Left ventricle myocardium inferior (tissue), 1 donor: ENCODE measurements at regions of chr20 and their contacts with region 1.

Region 1: GRCh38 chr20:44310664-44311639 is at the start of gene FITM2:
- DNase-seq: peak; percentile 99
- H3K4me3 ChIP-seq: peak within 1 kb of the TSS; percentile 85
- H3K27ac ChIP-seq: peak within 1 kb of the TSS; percentile 91
- H3K4me1 ChIP-seq: peaks cover 56% of the 10 kb centered on the region
- H3K27me3 ChIP-seq: no peaks in the 10 kb centered on the region
- CTCF ChIP-seq: peak; percentile 95
- total RNA-seq, gene FITM2: 160 TPM

Region 2: DNA sequence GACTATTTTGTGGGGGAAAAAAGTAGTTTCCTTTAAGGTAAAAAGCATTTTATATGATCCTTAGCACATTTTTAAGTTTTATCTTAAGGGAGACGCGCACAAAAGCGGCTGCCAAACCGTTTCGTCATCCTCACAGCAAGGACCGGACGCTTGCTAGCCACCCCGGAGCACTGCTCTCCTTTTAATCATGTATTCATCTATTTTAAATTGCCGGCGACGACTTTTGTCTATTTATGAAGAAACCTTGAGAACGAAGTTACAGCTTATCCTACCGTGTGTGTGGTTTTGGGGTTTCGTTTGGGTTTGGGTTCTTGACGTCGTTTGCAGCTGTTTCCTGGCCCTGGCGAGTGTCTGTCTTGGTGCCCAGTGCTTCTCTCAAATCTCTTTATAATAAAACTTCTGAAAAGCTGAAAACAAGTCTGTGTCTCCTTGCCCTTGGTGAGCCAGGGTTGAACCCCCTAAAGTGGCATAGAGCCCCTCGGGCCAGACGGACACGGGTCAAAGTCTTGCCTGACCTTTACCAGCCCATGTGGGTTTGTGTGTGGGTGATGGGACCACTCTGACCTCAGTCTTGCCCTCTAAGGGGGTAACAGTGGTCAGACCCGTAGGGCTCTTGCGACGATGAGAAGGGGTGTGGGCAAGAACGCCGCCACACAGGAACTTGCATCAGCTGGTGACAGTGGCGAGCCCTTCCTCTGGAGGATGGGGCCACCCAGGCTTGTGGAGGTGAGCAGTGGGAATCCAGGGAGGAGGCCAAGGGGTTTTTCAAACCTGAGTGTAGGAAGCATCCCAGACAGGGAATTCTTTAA is 241.5 kb before region 1 on chr20:
- intact Hi-C with region 1: no loop called
- DNase-seq: no peak
- H3K4me3 ChIP-seq: no peak overlapping the region
- H3K27ac ChIP-seq: no peak overlapping the region
- H3K4me1 ChIP-seq: peaks cover 8% of the 10 kb centered on the region
- H3K27me3 ChIP-seq: no peaks in the 10 kb centered on the region
- CTCF ChIP-seq: no peak

Region 3: DNA sequence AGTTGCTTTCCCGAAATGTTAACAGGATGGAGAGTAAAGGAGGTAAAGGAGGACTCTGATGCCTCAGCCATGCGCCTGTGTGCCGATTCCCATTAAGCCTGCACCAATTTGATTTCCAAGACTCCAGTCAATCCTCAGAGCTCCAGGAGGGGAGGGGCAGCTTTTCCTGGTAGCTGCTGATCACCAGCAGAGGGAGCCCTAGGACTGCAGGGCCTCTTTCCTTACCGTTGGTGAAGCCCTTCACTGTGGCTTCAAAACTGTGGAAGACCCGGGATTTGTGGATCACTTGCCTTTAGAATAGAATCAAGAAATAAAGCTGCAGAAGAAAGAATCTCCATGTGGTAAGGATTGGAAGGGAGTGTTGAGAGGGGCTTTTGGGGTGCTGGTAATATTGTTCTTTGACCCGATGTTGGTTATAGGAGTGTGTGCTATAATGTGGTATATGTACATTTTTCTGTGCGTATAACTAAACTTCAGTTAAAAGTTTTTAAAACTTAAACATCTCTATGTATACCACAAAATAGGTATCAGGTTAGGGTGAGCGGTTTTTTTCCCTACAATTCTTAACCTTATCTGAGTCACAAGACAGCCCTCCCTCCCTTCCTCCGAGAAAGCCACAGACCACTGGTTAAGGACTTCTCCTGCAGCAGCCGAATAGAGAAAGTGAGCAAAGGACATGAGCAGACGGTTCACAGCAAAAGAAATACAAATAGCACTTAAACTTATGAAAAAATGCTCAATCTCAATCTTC is 93.4 kb before region 1 on chr20:
- intact Hi-C with region 1: loop called (anchors 5 kb)
- DNase-seq: peak; percentile 60
- H3K4me3 ChIP-seq: peak overlapping the region; percentile 59
- H3K27ac ChIP-seq: peak overlapping the region; percentile 80
- H3K4me1 ChIP-seq: peaks cover 28% of the 10 kb centered on the region
- H3K27me3 ChIP-seq: no peaks in the 10 kb centered on the region
- CTCF ChIP-seq: peak; percentile 93